MCF 10A (cell line): ENCODE measurements at regions of chr6 and their contacts with region 1.

Region 1: DNA sequence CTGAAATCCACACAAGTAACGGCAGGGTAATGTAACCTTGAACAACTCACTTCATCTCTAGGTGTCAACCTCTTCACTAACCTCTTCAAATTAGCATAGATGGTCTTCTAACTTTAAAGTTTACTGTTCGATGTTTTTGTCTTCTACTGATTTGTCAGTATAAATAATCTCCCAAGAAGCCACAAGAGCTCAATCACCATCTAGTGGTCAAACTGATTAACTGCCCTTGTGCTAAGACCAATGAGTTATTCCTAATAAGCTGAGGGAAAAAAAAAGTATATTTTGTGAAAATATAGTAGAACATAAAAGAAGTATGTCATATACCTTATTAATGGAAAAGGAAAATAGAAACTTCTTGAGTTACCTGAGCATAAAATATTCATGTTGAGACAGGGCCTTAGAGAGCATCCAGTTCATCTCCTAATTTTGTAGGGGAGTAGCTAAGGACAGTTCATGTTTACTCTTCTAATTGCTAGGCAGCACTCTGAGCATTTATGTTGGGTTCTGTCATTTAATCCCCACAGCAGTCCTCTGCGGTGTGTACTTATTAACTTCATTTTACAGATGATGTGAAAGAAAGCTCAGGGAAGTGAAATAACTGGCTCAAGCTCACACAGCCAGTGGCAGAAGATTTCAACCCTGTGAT is 317.1 kb downstream of the ESR1 start:
- DNase-seq: peak; percentile 72
- H3K4me3 Mint-ChIP-seq: no peak overlapping the region
- H3K27ac Mint-ChIP-seq: no peak overlapping the region
- H3K4me1 Mint-ChIP-seq: peaks cover under 1% of the 10 kb centered on the region
- H3K27me3 Mint-ChIP-seq: no peaks in the 10 kb centered on the region
- CTCF ChIP-seq: peak; percentile 66

Region 2: GRCh38 chr6:151681433-151682059 is 443.0 kb before region 1 on chr6:
- CTCF ChIA-PET with region 1: interaction called, 11 read pairs
- POLR2A ChIA-PET with region 1: no interaction called
- intact Hi-C with region 1: no loop called
- DNase-seq: no peak
- H3K4me3 Mint-ChIP-seq: no peak overlapping the region
- H3K27ac Mint-ChIP-seq: no peak overlapping the region
- H3K4me1 Mint-ChIP-seq: no peaks in the 10 kb centered on the region
- H3K27me3 Mint-ChIP-seq: no peaks in the 10 kb centered on the region
- CTCF ChIP-seq: no peak

Region 3: DNA sequence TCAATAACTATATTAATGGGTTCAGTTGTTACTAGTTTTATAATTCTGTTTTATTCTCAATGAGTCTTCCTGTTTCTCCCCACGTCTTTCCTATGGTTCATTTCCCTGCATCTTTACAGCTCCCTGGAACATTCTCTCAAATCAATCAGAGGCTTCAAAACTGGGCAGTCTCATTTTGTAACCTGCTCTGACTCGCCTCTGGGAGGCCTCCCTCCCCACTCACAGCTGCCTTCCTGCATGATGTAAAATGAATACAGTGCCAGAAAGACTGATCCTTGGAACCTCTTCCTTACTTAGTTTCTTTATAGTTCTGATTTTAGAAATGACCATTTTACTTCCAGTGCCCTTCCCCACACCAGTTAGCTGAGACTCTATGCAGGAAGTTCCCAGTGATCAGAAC is 213.2 kb before region 1 on chr6:
- CTCF ChIA-PET with region 1: interaction called, 15 read pairs
- POLR2A ChIA-PET with region 1: no interaction called
- intact Hi-C with region 1: no loop called
- DNase-seq: peak; percentile 36
- H3K4me3 Mint-ChIP-seq: no peak overlapping the region
- H3K27ac Mint-ChIP-seq: peak overlapping the region; percentile 68
- H3K4me1 Mint-ChIP-seq: peaks cover 29% of the 10 kb centered on the region
- H3K27me3 Mint-ChIP-seq: no peaks in the 10 kb centered on the region
- CTCF ChIP-seq: no peak

Region 4: GRCh38 chr6:152094992-152095592 is 29.5 kb before region 1 on chr6:
- CTCF ChIA-PET with region 1: interaction called, 13 read pairs
- POLR2A ChIA-PET with region 1: interaction called, 5 read pairs
- intact Hi-C with region 1: no loop called
- DNase-seq: peak; percentile 98
- H3K4me3 Mint-ChIP-seq: peak overlapping the region; percentile 20
- H3K27ac Mint-ChIP-seq: peak overlapping the region; percentile 71
- H3K4me1 Mint-ChIP-seq: peaks cover 61% of the 10 kb centered on the region
- H3K27me3 Mint-ChIP-seq: no peaks in the 10 kb centered on the region
- CTCF ChIP-seq: no peak

Region 5: DNA sequence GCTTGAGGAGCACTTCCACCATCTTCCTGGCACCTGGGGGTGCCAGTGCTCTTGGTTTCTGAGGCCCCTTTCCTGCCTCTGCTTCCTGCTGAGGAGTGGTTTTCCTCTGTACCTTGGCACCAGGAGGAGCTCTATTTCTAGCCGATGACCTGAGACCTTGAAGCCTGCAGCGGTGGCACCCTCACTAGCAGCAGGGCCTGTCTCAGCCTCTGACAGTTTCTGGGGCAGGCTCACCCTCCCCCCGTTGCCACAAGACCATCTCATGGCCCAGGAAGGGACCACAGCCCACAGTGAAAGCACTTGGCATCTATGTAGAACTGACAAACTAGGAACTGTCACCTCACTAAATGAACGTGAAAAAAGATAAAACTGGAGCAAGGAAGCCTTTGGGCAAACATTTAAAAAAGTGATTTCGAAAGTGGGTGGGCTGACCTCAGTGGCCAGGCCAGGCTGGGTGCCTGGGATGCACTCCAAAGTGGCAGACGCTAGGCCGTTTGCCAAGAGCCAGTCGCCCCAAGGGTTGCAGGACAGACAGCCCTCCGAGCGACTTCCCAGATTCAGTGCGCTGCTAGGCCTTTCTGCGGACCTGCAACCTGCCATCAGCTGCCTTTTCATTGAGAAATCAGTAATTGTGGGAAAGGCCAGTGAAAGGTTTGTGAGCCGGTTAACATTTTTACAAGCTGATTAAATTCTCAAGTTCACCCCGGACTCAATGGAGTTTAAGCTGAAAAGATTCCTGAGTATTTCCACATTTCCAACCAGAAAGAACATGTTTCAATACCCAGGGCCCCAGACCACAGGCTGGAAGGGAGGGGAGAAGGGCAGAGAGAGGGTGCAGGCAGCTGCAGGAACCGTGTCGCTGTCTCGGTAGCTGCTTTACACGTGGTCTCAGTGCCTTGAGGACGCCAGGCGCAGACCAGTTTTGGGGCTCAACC is 13.4 kb before region 1 on chr6:
- CTCF ChIA-PET with region 1: interaction called, 10 read pairs
- POLR2A ChIA-PET with region 1: interaction called, 3 read pairs
- intact Hi-C with region 1: no loop called
- DNase-seq: peak; percentile 71
- H3K4me3 Mint-ChIP-seq: no peak overlapping the region
- H3K27ac Mint-ChIP-seq: no peak overlapping the region
- H3K4me1 Mint-ChIP-seq: peaks cover 8% of the 10 kb centered on the region
- H3K27me3 Mint-ChIP-seq: no peaks in the 10 kb centered on the region
- CTCF ChIP-seq: no peak